Activated naive CD8-positive, alpha-beta T cell treated with anti-CD3 and anti-CD28 coated beads, Interleukin-2, amount 10 ng/mL, durations not matched to agents 7 days and 5 days (primary cell): ENCODE measurements at regions of chr12 and their contacts with region 1.

Region 1: GRCh38 chr12:6944381-6945186 is 762 bp downstream of the C12orf57 start:
- DNase-seq: peak; percentile 87
- ATAC-seq: peak; percentile 44
- H3K4me3 Mint-ChIP-seq: peak overlapping the region; percentile 97
- H3K27ac Mint-ChIP-seq: peak overlapping the region; percentile 94
- H3K4me1 Mint-ChIP-seq: peaks cover 48% of the 10 kb centered on the region
- H3K27me3 Mint-ChIP-seq: no peaks in the 10 kb centered on the region

Region 2: DNA sequence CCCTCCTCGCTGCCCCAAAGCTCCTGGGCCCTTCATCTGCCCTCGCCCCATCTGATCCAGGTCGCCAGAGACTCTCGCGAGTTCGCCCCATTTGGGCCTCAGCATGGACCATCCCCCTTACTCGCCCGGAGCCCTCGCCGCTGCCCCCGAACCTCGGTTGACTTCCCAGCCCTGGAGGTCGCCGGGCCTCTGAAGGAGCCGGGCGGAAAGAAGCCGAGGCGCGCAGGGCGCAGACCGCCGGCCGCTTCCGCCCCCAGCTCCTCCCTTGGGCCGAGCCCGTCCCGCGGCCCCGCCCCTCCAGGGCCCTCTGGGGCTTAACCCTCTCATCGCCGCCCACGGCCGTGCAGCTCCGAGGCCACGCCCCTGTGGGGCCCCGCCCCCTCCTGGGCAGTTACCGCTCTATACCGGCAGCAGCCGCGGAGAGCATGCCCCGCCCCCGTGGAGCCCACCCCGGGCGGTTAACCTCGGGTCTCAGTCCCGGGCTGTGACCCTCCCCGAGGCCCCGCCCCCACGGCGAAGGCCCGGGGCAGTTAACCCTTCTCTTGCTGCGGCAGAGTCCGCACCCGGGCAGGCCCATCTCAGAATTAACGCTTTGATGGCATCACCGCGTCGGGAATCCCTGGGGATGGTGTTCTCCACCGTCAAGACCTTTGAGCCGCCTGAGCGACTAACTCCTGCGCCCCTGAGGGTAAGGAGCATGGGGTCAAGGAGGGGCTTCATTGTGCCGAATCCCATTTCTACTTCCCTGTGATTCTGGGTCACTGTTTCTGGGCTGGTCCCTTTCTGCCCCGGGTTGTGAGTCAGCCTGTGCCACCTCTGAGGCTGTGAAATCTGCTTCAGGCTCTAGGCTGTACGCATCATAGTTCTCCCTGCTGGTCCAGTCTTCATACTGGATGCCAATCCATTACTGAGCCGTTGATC is 71.2 kb before region 1 on chr12 and contains the start of gene SPSB2:
- POLR2A ChIA-PET with region 1: interaction called, 48 read pairs
- DNase-seq: peak; percentile 100
- ATAC-seq: peak; percentile 78
- H3K4me3 Mint-ChIP-seq: peak within 1 kb of the TSS; percentile 94
- H3K27ac Mint-ChIP-seq: peak within 1 kb of the TSS; percentile 93
- H3K4me1 Mint-ChIP-seq: peaks cover 48% of the 10 kb centered on the region
- H3K27me3 Mint-ChIP-seq: no peaks in the 10 kb centered on the region
- total RNA-seq, gene SPSB2: 16.4 to 17.0 TPM

Region 3: GRCh38 chr12:6927379-6928024 is 17.1 kb before region 1 on chr12 and contains the start of gene ATN1:
- POLR2A ChIA-PET with region 1: interaction called, 64 read pairs
- DNase-seq: peak; percentile 68
- ATAC-seq: peak; percentile 23
- H3K4me3 Mint-ChIP-seq: peak within 1 kb of the TSS; percentile 82
- H3K27ac Mint-ChIP-seq: peak within 1 kb of the TSS; percentile 80
- H3K4me1 Mint-ChIP-seq: peaks cover 47% of the 10 kb centered on the region
- H3K27me3 Mint-ChIP-seq: no peaks in the 10 kb centered on the region
- total RNA-seq, gene ATN1: 31.0 to 31.3 TPM

Region 4: DNA sequence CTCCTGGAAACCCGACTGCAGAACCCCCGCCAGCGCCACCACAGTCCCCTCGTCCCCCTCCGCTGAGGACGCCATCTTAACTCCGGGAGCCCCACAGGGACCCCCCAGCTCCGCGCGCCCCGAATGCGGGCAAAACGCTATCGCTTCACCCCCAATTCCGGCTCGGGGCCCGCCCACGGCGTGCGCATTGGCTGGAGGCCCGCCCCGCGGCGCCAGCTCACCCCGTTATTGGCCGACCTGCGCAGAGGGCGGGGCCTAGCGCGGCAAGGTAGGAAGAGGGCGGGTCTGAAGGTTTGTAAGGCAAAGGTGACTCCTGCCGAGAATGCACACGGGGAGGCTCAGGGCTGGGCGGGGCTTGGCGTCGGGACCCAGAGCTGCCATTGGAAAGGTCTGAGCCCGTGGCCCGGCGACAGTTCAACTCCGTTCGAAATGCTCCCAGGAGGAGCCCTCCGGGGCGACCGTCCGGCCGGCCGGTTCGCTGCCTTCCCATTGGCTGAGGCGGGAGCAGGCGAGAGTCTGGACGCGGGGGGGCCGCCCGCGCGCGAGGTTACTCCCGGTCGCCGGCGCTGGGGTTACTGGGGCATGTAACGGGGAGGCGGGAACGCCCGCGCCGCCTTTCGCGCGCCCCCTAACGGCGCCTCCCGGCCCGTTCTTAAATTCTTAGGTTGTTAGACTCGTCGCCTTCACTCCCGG is 73.9 kb after region 1 on chr12 and contains the start of gene LPCAT3:
- POLR2A ChIA-PET with region 1: interaction called, 44 read pairs
- DNase-seq: peak; percentile 99
- ATAC-seq: peak; percentile 96
- H3K4me3 Mint-ChIP-seq: peak within 1 kb of the TSS; percentile 98
- H3K27ac Mint-ChIP-seq: peak within 1 kb of the TSS; percentile 87
- H3K4me1 Mint-ChIP-seq: peaks cover 16% of the 10 kb centered on the region
- H3K27me3 Mint-ChIP-seq: no peaks in the 10 kb centered on the region
- total RNA-seq, gene LPCAT3: 30.3 to 33.9 TPM

Region 5: DNA sequence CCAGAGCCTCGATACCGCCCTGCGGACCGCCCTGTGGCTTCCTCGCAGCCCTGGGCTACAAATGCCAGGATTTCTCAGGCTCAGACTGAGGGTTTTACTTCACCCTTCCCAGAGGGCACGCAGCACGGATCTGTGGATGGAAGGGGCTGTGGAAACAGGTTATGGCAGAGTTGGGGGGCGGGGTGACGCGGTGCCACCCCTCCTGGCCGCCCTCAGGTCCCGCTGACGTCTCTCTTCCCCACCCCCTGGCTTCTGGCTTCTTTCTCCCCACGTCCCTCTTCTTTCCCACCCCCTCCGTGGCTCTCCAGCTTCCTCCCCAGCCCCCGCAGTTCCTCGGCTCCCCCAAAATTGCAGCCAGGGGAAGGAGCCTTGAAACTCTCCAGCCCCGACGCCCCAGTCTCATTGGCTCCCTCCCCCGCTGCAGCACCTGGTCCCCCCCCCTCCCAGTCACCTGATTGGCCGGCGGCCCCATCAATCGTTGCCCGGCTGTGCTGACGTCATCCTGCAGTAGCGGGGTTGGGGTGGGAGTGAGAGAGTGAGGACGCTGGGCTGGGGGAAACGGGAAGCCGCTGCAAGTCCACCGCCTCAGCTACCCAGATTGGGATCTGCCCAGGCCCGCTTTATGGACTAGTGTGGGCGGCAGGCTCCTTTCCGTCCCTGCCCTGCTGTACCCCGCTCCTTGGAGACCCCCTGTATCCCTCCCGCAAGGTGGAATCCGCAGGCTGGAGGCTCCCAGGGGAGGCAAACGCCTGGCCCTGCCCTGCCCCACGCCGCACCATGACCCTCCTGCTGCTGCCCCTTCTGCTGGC is 185.5 kb after region 1 on chr12 and contains the start of gene CLSTN3:
- POLR2A ChIA-PET with region 1: interaction called, 12 read pairs
- DNase-seq: peak; percentile 88
- ATAC-seq: peak; percentile 78
- H3K4me3 Mint-ChIP-seq: peak within 1 kb of the TSS; percentile 97
- H3K27ac Mint-ChIP-seq: peak within 1 kb of the TSS; percentile 93
- H3K4me1 Mint-ChIP-seq: peaks cover 30% of the 10 kb centered on the region
- H3K27me3 Mint-ChIP-seq: no peaks in the 10 kb centered on the region
- total RNA-seq, gene CLSTN3: 99.3 to 104 TPM